SK-N-SH (cell line): ENCODE measurements at regions of chr11 and their contacts with region 1.

Region 1: DNA sequence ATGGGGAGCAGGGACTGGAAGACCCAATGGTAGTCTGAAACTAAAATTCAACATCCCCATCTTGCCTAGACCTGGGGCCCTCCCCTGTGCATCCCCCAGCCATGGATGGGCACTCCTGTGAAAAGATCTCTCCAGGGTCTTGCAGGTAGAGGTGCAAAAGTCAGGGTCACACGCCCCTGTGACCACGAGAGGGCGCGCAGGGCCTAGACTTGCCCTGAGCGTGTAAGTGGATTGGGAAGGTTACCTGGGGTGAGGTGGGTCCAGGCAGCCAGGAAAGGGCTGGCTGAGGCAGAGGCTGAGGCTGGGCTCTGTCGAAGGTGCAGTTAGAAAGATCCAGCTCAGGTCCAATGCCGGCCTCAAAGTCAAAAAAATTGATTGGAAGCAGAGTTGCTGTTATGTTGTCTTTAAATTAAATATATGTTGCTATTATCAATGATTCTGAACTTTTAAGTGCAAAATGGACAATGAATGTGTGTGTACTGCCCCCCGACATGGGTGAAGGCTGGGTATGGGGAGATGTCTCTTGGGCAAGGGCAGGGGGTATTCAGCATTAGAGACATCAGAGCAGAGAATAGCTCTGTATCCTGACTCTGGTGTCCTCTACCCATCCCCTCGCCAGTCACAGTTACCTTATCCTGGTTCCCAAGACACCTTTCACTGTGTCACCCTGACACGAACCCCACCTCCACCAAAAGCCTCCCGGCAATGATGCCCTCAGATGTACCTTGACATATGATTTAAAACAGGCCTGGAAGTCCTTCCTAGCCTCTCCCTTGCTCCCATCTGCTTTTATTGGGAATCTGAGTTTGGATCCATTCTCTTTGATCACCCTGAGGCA is 4.7 kb upstream of the POU2F3 start:
- DNase-seq: peak; percentile 78
- H3K4me3 ChIP-seq: no peak overlapping the region; a peak in 1 of 4 replicates
- H3K27ac ChIP-seq: no peak overlapping the region
- H3K4me1 ChIP-seq: peaks cover 0 to 5% of the 10 kb centered on the region in 2 experiments; a peak in 1 of 4 replicates
- H3K27me3 ChIP-seq: peaks cover 7% of the 10 kb centered on the region; the same call in 1 of the 2 replicates
- CTCF ChIP-seq: peak; percentile 73
- EP300 ChIP-seq: no peak
- RAD21 ChIP-seq: peak; percentile 84

Region 2: DNA sequence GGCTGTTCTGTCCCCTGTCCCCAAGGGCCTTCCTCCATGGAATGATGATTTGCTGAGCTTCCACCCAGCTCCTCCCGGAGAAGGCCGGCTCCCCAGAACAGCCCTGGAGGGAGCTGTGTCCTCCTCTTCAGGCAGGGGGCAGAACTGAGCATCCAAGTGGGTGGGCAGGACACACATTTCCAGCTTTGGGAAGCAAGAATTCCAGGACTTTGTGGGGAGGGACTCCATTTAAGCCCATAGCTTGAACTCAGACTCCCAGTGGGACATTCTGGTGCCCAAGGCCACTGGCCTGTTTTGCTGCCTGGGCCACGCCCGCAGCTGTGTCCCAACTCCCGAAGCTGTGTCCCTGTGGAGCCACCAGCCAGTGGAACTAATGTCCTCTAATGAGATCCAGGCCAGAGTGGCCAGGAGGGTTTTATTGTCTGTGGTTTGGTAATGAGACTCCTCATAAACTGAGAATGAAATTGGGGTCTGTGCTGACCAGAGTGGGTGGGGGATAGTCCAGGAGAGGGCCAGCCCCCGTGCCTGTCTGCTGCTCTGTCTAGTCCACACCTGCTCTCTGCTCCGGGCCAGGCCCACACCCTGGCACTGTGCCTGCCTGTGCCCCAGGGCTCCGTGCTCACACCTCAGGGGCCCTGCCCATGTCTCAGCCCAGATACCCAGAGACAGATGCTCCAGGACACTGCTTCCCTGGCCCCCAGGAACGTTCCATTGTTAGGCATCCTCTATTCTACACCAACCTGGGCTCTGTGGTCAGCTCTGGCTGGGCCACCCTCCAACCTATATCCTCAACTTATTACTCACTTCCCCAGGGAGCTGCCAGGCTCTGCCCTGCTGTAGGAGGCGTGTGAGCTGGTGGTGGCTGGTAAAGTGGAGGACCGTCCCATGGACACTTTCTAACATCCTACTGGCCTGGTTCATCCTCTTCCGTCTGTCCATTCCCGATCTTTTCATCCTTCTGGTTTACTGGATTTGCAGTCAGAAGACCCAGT is 513.8 kb before region 1 on chr11:
- CTCF ChIA-PET with region 1: no interaction called
- POLR2A ChIA-PET with region 1: no interaction called
- DNase-seq: peak; percentile 75
- H3K4me3 ChIP-seq: no peak overlapping the region
- H3K27ac ChIP-seq: peak overlapping the region in 1 of 2 experiments; percentile 78; a peak in 2 of 4 replicates
- H3K4me1 ChIP-seq: peaks cover 9 to 91% of the 10 kb centered on the region in 2 experiments; a peak in 2 of 4 replicates
- H3K27me3 ChIP-seq: no peaks in the 10 kb centered on the region
- CTCF ChIP-seq: peak; percentile 47
- EP300 ChIP-seq: 0 out of 4 replicates have a peak, but pooled peaks of 1 of the 2 experiments have one; percentile 35
- RAD21 ChIP-seq: peak; percentile 32

Region 3: GRCh38 chr11:120079750-120080490 is 155.3 kb before region 1 on chr11:
- CTCF ChIA-PET with region 1: no interaction called
- POLR2A ChIA-PET with region 1: no interaction called
- DNase-seq: no peak
- H3K4me3 ChIP-seq: no peak overlapping the region
- H3K27ac ChIP-seq: no peak overlapping the region
- H3K4me1 ChIP-seq: no peaks in the 10 kb centered on the region
- H3K27me3 ChIP-seq: no peaks in the 10 kb centered on the region
- CTCF ChIP-seq: peak; percentile 49
- EP300 ChIP-seq: no peak
- RAD21 ChIP-seq: no peak

Region 4: GRCh38 chr11:120182790-120183491 is 52.3 kb before region 1 on chr11:
- CTCF ChIA-PET with region 1: interaction called, 68 read pairs
- POLR2A ChIA-PET with region 1: no interaction called
- DNase-seq: no peak
- H3K4me3 ChIP-seq: no peak overlapping the region
- H3K27ac ChIP-seq: no peak overlapping the region
- H3K4me1 ChIP-seq: peaks cover 5 to 51% of the 10 kb centered on the region in 2 experiments; a peak in 2 of 4 replicates
- H3K27me3 ChIP-seq: no peaks in the 10 kb centered on the region
- CTCF ChIP-seq: peak; percentile 42
- EP300 ChIP-seq: no peak
- RAD21 ChIP-seq: peak; percentile 42

Region 5: GRCh38 chr11:120248551-120249278 is 13.5 kb after region 1 on chr11:
- CTCF ChIA-PET with region 1: interaction called, 19 read pairs
- POLR2A ChIA-PET with region 1: no interaction called
- DNase-seq: no peak
- H3K4me3 ChIP-seq: no peak overlapping the region
- H3K27ac ChIP-seq: no peak overlapping the region; a peak in 1 of 4 replicates
- H3K4me1 ChIP-seq: peaks cover 6 to 12% of the 10 kb centered on the region in 2 experiments; a peak in 3 of 4 replicates
- H3K27me3 ChIP-seq: peaks cover 5% of the 10 kb centered on the region; the same call in 1 of the 2 replicates
- CTCF ChIP-seq: no peak
- EP300 ChIP-seq: no peak
- RAD21 ChIP-seq: no peak

Region 6: DNA sequence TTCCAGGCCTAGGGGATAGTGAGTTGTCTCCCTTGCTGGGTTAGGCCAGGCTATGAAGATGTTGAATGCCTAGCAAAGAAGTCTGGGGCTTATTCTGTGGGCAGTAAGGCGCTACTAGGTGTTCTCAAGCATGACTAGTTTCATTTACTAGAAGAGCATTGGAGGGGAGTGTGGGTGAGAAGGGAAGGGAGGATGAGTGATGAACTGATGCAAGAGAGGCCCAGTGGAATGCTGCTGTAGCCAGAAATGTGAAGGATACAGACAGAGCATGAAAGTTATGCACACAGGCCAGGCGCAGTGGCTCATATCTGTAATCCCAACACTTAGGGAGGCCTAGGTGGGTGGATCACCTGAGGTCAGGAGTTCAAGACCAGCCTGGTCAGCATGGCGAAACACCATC is 38.2 kb after region 1 on chr11:
- CTCF ChIA-PET with region 1: interaction called, 10 read pairs
- POLR2A ChIA-PET with region 1: no interaction called
- DNase-seq: no peak
- H3K4me3 ChIP-seq: no peak overlapping the region
- H3K27ac ChIP-seq: no peak overlapping the region
- H3K4me1 ChIP-seq: peaks cover 0 to 5% of the 10 kb centered on the region in 2 experiments; a peak in 1 of 4 replicates
- H3K27me3 ChIP-seq: no peaks in the 10 kb centered on the region; the same call in 1 of the 2 replicates
- CTCF ChIP-seq: no peak
- EP300 ChIP-seq: no peak
- RAD21 ChIP-seq: no peak

Region 7: GRCh38 chr11:120400564-120401364 is 165.5 kb after region 1 on chr11:
- CTCF ChIA-PET with region 1: no interaction called
- POLR2A ChIA-PET with region 1: no interaction called
- DNase-seq: no peak
- H3K4me3 ChIP-seq: peak overlapping the region; percentile 14 to 27; a peak in 2 of 4 replicates
- H3K27ac ChIP-seq: peak overlapping the region; percentile 50 to 74; a peak in 3 of 4 replicates
- H3K4me1 ChIP-seq: peaks cover 2 to 28% of the 10 kb centered on the region in 2 experiments; a peak in 2 of 4 replicates
- H3K27me3 ChIP-seq: no peaks in the 10 kb centered on the region
- CTCF ChIP-seq: no peak
- EP300 ChIP-seq: peak; percentile 12 to 66; a peak in 1 of 4 replicates
- RAD21 ChIP-seq: no peak

Region 8: GRCh38 chr11:120719348-120719747 is 484.1 kb after region 1 on chr11:
- CTCF ChIA-PET with region 1: no interaction called
- POLR2A ChIA-PET with region 1: no interaction called
- DNase-seq: no peak
- H3K4me3 ChIP-seq: no peak overlapping the region
- H3K27ac ChIP-seq: no peak overlapping the region
- H3K4me1 ChIP-seq: peaks cover 0 to 3% of the 10 kb centered on the region in 2 experiments; a peak in 1 of 4 replicates
- H3K27me3 ChIP-seq: no peaks in the 10 kb centered on the region
- CTCF ChIP-seq: no peak
- EP300 ChIP-seq: no peak
- RAD21 ChIP-seq: no peak